H1 (cell line): ENCODE measurements at regions of chr1 and their contacts with region 1.

Region 1: GRCh38 chr1:209513226-209513625 is 70.3 kb upstream of the CAMK1G start:
- DNase-seq: peak in 1 of 2 experiments; percentile 50
- H3K4me3 ChIP-seq: no peak overlapping the region
- H3K27ac ChIP-seq: no peak overlapping the region
- H3K4me1 ChIP-seq: no peaks in the 10 kb centered on the region
- H3K27me3 ChIP-seq: no peaks in the 10 kb centered on the region
- CTCF ChIP-seq: peak in 2 of 3 experiments; percentile 75 to 94; a peak in 3 of 4 replicates
- EP300 ChIP-seq: no peak
- POLR2A ChIP-seq: no peak
- RAD21 ChIP-seq: peak; percentile 90 to 94

Region 2: GRCh38 chr1:209248649-209249279 is 264.5 kb before region 1 on chr1:
- CTCF ChIA-PET with region 1: interaction called, 25 read pairs
- POLR2A ChIA-PET with region 1: no interaction called
- DNase-seq: peak in 1 of 2 experiments; percentile 83
- H3K4me3 ChIP-seq: no peak overlapping the region
- H3K27ac ChIP-seq: no peak overlapping the region
- H3K4me1 ChIP-seq: peaks cover 0 to 16% (median 5%) of the 10 kb centered on the region in 4 experiments; a peak in 4 of 7 replicates
- H3K27me3 ChIP-seq: no peaks in the 10 kb centered on the region
- CTCF ChIP-seq: peak in 2 of 3 experiments; percentile 83 to 90; a peak in 3 of 4 replicates
- EP300 ChIP-seq: no peak
- POLR2A ChIP-seq: no peak
- RAD21 ChIP-seq: peak; percentile 86 to 91

Region 3: GRCh38 chr1:209421978-209422680 is 91.1 kb before region 1 on chr1:
- CTCF ChIA-PET with region 1: no interaction called
- POLR2A ChIA-PET with region 1: no interaction called
- DNase-seq: no peak
- H3K4me3 ChIP-seq: no peak overlapping the region
- H3K27ac ChIP-seq: no peak overlapping the region
- H3K4me1 ChIP-seq: peaks cover 0 to 7% (median 2%) of the 10 kb centered on the region in 4 experiments; a peak in 3 of 7 replicates
- H3K27me3 ChIP-seq: no peaks in the 10 kb centered on the region; a peak in 2 of 7 replicates
- CTCF ChIP-seq: no peak
- EP300 ChIP-seq: no peak
- POLR2A ChIP-seq: no peak
- RAD21 ChIP-seq: no peak

Region 4: DNA sequence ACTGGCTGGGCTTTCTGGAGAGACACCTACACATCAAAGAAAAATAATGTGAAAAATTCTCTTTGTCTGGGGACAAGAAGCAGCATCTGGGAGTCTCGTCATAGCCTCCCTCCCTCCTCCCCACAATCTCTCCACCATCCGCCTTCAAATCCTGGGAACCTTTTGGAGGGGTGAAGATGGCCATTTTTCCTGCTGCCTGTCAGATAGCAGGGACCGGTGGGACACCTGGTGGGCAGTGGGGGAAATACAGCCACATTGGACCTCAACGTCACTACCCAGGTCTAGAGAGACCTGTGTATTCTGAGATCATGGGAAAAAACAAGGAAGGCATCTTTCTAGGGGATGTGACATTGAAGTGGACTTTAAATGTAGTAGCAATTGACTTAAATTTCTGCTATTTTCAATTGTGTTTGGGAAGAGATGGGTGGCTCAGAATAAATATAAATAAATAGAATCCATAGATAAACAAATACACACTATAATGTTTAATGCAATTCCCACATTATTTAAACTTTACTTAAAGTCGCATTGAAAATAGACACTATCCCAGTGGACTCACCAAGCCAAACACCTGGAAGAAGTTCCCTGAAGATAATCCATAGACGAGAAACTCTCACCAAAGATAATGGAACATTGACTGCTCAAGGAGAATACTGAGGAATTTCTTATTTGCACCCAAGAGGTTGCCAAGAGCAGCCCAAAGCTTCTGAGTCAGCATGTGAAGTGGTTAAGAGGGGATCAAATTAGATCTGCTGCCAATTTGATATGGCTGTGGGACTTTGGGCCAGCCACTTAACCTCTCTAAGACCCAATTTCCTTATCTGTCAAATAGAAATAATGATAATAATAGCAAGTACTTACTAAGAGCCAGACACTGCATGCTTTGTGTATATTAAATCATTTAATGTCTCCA is 77.3 kb before region 1 on chr1:
- CTCF ChIA-PET with region 1: interaction called, 15 read pairs
- POLR2A ChIA-PET with region 1: no interaction called
- DNase-seq: peak; percentile 75 to 97
- H3K4me3 ChIP-seq: no peak overlapping the region
- H3K27ac ChIP-seq: no peak overlapping the region
- H3K4me1 ChIP-seq: peaks cover 8 to 29% (median 25%) of the 10 kb centered on the region in 4 experiments
- H3K27me3 ChIP-seq: no peaks in the 10 kb centered on the region
- CTCF ChIP-seq: peak; percentile 92 to 93 (median 93)
- EP300 ChIP-seq: 0 out of 3 replicates have a peak, but pooled peaks of 1 of the 2 experiments have one; percentile 14
- POLR2A ChIP-seq: no peak
- RAD21 ChIP-seq: peak; percentile 99

Region 5: GRCh38 chr1:209490013-209490412 is 23.2 kb before region 1 on chr1:
- CTCF ChIA-PET with region 1: interaction called, 63 read pairs
- POLR2A ChIA-PET with region 1: no interaction called
- DNase-seq: no peak
- H3K4me3 ChIP-seq: no peak overlapping the region
- H3K27ac ChIP-seq: no peak overlapping the region
- H3K4me1 ChIP-seq: no peaks in the 10 kb centered on the region; a peak in 1 of 7 replicates
- H3K27me3 ChIP-seq: peaks cover 0 to 1% (median 0%) of the 10 kb centered on the region in 4 experiments; a peak in 1 of 7 replicates
- CTCF ChIP-seq: peak in 2 of 3 experiments; percentile 25 to 50; a peak in 2 of 4 replicates
- EP300 ChIP-seq: no peak
- POLR2A ChIP-seq: no peak
- RAD21 ChIP-seq: peak; percentile 71 to 78

Region 6: DNA sequence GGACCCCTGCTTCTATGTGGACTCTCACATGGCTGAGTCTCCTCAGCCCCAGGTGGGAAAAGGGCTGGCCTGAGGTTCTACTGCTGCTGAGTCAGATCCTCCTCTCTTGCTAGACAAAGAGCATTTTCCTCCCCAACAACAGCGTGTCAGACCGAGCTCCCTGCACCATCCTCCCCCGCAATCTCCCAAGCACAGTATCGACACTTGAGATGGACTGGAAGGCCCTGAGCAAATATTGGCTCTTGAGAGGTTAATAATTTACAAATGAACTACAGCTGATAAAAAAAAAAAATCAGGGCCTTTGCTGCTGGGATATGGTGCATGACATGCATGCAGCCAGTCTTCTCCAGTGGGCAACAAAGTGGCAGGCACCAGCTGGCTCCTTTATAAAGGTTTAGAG is 14.8 kb after region 1 on chr1:
- CTCF ChIA-PET with region 1: interaction called, 32 read pairs
- POLR2A ChIA-PET with region 1: no interaction called
- DNase-seq: no peak
- H3K4me3 ChIP-seq: no peak overlapping the region
- H3K27ac ChIP-seq: no peak overlapping the region
- H3K4me1 ChIP-seq: no peaks in the 10 kb centered on the region
- H3K27me3 ChIP-seq: no peaks in the 10 kb centered on the region; a peak in 1 of 7 replicates
- CTCF ChIP-seq: no peak
- EP300 ChIP-seq: no peak
- POLR2A ChIP-seq: no peak
- RAD21 ChIP-seq: no peak

Region 7: DNA sequence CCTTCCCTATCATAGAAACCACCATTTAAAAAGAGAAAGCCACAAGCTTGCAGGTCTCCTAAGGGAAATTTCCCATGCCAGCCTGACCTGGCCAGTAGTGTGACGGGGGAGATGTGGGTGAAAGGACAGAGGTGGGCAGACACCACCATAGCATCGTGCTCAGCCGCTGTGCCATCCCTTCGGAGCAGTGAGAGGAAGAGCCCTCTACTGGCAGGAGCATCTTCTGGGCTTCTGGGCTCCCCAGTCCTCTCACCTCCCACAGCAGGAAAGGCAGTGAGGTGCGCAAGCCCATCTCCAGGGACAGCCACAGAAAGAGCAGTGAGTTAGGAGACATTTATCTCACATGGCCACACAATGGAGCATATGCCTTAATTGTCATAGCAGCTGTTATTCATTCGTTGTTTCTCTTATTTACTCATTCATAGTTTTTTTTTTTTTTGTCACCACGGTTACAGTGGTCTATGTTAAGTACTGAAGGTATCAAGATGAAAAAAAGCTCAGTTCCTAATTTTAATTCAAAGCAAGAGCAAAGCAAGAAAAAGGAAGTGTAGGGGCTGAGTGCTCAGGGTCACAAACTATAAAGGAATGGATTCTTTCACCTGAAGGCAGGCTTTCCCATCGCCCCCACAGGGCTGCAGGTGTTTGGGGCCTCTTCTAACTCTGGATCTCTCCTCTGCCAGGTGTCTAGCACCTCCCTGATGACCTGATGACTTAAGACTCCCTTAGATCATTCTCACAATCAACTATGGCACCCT is 21.4 kb after region 1 on chr1:
- CTCF ChIA-PET with region 1: interaction called, 32 read pairs
- POLR2A ChIA-PET with region 1: no interaction called
- DNase-seq: no peak
- H3K4me3 ChIP-seq: no peak overlapping the region
- H3K27ac ChIP-seq: no peak overlapping the region
- H3K4me1 ChIP-seq: peaks cover 0 to 8% (median 4%) of the 10 kb centered on the region in 4 experiments; a peak in 1 of 7 replicates
- H3K27me3 ChIP-seq: no peaks in the 10 kb centered on the region; a peak in 1 of 7 replicates
- CTCF ChIP-seq: peak in 2 of 3 experiments; percentile 38 to 41; a peak in 2 of 4 replicates
- EP300 ChIP-seq: no peak
- POLR2A ChIP-seq: no peak
- RAD21 ChIP-seq: peak in 1 of 2 experiments; percentile 6; a peak in 1 of 4 replicates

Region 8: GRCh38 chr1:209549443-209550205 is 36.4 kb after region 1 on chr1:
- CTCF ChIA-PET with region 1: interaction called, 43 read pairs
- POLR2A ChIA-PET with region 1: no interaction called
- DNase-seq: no peak
- H3K4me3 ChIP-seq: no peak overlapping the region
- H3K27ac ChIP-seq: no peak overlapping the region
- H3K4me1 ChIP-seq: peaks cover 2 to 21% (median 12%) of the 10 kb centered on the region in 4 experiments; a peak in 5 of 7 replicates
- H3K27me3 ChIP-seq: peaks cover 0 to 5% (median under 1%) of the 10 kb centered on the region in 4 experiments; a peak in 3 of 7 replicates
- CTCF ChIP-seq: peak; percentile 52 to 65 (median 61)
- EP300 ChIP-seq: no peak
- POLR2A ChIP-seq: no peak
- RAD21 ChIP-seq: peak in 1 of 2 experiments; percentile 30; a peak in 1 of 4 replicates

Region 9: DNA sequence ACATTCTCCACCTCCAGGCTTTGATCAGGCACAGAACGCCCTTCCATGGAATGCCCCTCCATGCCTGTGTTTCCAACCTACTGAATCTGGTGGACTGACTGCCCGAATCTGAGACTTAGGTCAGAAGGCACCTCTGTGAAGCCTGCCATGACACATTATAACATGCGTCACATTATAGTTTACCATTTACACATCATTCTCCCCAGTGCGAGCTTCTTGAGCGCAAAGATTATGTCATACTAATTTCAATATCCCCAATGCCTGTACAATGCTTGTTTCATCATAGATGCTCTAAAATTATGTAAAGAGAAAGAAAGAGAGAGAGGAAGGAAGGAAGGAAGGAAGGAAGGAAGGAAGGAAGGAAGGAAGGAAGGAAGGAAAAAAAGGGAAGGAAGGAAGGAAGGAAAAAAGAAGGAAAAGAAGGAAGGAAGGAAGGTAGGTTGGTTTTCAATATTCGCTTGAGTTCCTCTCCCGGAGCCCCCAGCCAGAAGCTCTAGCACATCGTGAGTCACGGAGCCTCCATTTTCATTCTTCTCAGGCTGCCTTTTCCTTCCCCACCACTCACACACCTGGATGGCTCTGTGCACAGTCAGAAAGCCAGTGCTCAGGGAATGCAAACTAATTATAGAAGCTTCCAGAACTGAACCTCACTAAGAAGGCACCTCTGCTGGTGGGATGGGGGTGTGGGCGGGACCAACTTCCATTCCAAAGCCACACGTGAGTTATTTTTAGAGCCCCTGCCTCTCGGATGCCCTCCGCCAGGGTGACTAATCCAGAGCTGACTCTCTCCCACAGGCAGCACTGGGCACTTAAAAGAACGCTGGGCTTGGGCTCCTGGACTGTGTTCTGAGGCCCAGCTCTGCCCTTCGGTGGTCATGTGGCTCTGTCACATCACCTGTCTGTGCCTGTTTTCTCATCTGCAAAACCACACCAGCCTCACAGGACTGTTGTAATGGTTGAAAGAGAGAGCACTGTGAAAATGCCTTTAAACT is 111.6 kb after region 1 on chr1:
- CTCF ChIA-PET with region 1: no interaction called
- POLR2A ChIA-PET with region 1: no interaction called
- DNase-seq: no peak
- H3K4me3 ChIP-seq: no peak overlapping the region
- H3K27ac ChIP-seq: no peak overlapping the region
- H3K4me1 ChIP-seq: peaks cover 0 to 8% (median 3%) of the 10 kb centered on the region in 4 experiments; a peak in 3 of 7 replicates
- H3K27me3 ChIP-seq: no peaks in the 10 kb centered on the region
- CTCF ChIP-seq: no peak
- EP300 ChIP-seq: no peak
- POLR2A ChIP-seq: no peak
- RAD21 ChIP-seq: no peak

Region 10: DNA sequence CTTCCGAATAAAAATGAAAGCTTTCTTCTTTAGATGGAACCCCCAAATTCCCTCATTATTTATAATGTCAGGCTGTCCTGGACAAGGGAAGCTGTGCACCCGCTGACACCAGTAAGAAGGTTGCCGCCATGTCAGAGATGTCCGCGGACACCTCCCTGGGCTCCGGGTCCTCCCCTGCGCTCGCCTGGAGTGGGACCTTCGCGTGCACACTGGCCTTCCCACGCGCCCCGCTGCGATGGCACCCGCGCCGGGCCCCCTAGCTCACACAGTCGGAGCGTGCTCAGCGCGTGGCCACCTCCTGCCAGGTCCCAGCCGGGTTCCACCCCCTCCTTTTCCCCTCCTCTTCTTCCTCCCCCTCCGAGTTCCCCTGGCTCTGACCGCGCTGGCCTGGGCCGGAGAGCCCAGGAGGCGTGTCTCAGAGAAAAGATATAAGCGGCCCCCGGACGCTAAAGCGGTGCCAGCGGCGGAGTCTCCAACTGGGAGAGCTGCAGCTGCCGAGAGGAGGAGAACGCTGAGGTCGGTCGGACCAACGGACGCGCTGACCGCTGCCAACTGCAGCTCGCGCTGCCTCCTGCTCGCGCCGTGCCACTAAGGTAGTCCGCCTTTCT is 161.8 kb after region 1 on chr1 and contains the start of gene G0S2:
- CTCF ChIA-PET with region 1: no interaction called
- POLR2A ChIA-PET with region 1: no interaction called
- DNase-seq: peak in 1 of 2 experiments; percentile 71
- H3K4me3 ChIP-seq: peak within 1 kb of the TSS; percentile 40 to 64 (median 56)
- H3K27ac ChIP-seq: no peak within 1 kb of the TSS
- H3K4me1 ChIP-seq: peaks cover 0 to 4% (median 3%) of the 10 kb centered on the region in 4 experiments; a peak in 6 of 7 replicates
- H3K27me3 ChIP-seq: peaks cover 18 to 46% (median 42%) of the 10 kb centered on the region in 4 experiments
- CTCF ChIP-seq: no peak
- EP300 ChIP-seq: no peak
- POLR2A ChIP-seq: no peak
- RAD21 ChIP-seq: no peak
- total RNA-seq, gene G0S2: 1.0 and 1.7 TPM in 2 replicates